ENCODE measurements at regions of chr15 and their contacts with region 1.

Region 1: GRCh38 chr15:41116116-41116871 is at the start of gene INO80:
- DNase-seq: peak; percentile 96 to 97 (median 97)
- H3K4me3 ChIP-seq: peak within 1 kb of the TSS; percentile 95 to 100
- H3K4me3 Mint-ChIP-seq: peak within 1 kb of the TSS; percentile 93 to 99 (median 96)
- H3K27ac ChIP-seq: peak within 1 kb of the TSS; percentile 84
- H3K27ac Mint-ChIP-seq: peak within 1 kb of the TSS; percentile 87 to 100 (median 99)
- H3K4me1 ChIP-seq: peaks cover 31% of the 10 kb centered on the region
- H3K4me1 Mint-ChIP-seq: peaks cover 15 to 36% (median 26%) of the 10 kb centered on the region in 4 donors
- H3K27me3 ChIP-seq: no peaks in the 10 kb centered on the region
- H3K27me3 Mint-ChIP-seq: peaks cover 0 to 2% of the 10 kb centered on the region in 2 donors
- total RNA-seq, gene INO80: 29.7 to 34.4 TPM

Region 2: GRCh38 chr15:41283653-41284426 is 167.5 kb after region 1 on chr15:
- CTCF ChIA-PET with region 1: no interaction called
- POLR2A ChIA-PET with region 1: no interaction called
- intact Hi-C with region 1: loop called (anchors 5 kb)
- DNase-seq: peak; percentile 97 to 98 (median 98)
- H3K4me3 ChIP-seq: peak overlapping the region; percentile 91 to 97
- H3K4me3 Mint-ChIP-seq: peak overlapping the region; percentile 93 to 99 (median 98)
- H3K27ac ChIP-seq: peak overlapping the region; percentile 86
- H3K27ac Mint-ChIP-seq: peak overlapping the region; percentile 92 to 99 (median 99)
- H3K4me1 ChIP-seq: peaks cover 43% of the 10 kb centered on the region
- H3K4me1 Mint-ChIP-seq: peaks cover 28 to 53% (median 41%) of the 10 kb centered on the region in 4 donors
- H3K27me3 ChIP-seq: no peaks in the 10 kb centered on the region
- H3K27me3 Mint-ChIP-seq: no peaks in the 10 kb centered on the region

Region 3: GRCh38 chr15:41445399-41445798 is 329.1 kb after region 1 on chr15:
- CTCF ChIA-PET with region 1: no interaction called
- POLR2A ChIA-PET with region 1: no interaction called
- intact Hi-C with region 1: no loop called
- DNase-seq: no peak
- H3K4me3 ChIP-seq: no peak overlapping the region
- H3K4me3 Mint-ChIP-seq: no peak overlapping the region
- H3K27ac ChIP-seq: no peak overlapping the region
- H3K27ac Mint-ChIP-seq: peak overlapping the region in 2 of 7 donors; percentile 22 to 61
- H3K4me1 ChIP-seq: peaks cover 13% of the 10 kb centered on the region
- H3K4me1 Mint-ChIP-seq: peaks cover 10 to 21% (median 16%) of the 10 kb centered on the region in 4 donors
- H3K27me3 ChIP-seq: no peaks in the 10 kb centered on the region
- H3K27me3 Mint-ChIP-seq: no peaks in the 10 kb centered on the region